CD4-positive, alpha-beta T cell (primary cell): ENCODE measurements at regions of chr2 and their contacts with region 1.

Region 1: DNA sequence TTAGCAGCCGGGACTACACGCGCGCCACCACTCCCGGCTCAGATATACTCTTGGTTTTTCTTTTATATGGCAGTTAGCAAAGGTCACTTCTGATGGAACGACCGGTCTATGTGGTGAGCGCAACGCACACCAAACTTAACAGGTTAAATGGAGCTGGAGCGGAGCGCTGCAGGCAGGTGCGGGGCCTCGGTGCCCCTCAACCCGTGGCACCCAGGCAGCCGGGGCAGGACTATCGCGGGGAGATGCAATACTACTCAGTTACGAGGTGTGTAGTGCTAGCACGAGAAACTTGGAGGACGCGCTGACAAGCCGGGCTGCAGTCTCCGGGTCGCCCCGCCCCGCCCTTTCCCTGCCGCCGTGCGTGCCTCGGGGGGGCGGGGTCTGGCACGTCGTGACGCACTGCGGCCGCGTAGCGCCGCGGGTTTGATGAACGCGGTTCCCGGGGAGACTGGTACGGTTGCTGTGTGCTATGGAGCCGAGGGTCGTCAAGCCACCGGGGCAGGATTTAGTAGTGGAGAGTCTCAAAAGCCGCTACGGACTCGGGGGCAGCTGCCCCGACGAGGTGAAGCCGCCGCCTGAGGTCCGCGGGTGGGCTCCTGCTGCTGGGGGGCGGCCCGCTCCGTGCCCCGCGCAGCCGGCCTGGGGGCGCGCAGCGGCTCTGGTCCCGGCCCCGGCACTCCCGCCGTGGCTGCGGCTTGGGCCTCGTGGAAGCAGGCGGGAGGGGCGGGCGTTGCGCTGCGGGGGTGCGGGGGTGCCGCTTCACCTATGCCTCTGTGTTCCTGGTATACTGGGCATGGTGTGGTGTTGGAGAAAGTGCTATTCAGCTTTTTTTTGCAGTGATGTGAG is at the start of gene CCDC138:
- DNase-seq: peak; percentile 83 to 96 (median 90)
- ATAC-seq: peak; percentile 95
- H3K4me3 ChIP-seq: peak within 1 kb of the TSS; percentile 78
- H3K4me3 Mint-ChIP-seq: peak within 1 kb of the TSS; percentile 99
- H3K27ac ChIP-seq: peak within 1 kb of the TSS; percentile 33 to 63
- H3K27ac Mint-ChIP-seq: peak within 1 kb of the TSS; percentile 92
- H3K4me1 ChIP-seq: peaks cover 8% of the 10 kb centered on the region
- H3K4me1 Mint-ChIP-seq: peaks cover 22% of the 10 kb centered on the region
- H3K27me3 ChIP-seq: no peaks in the 10 kb centered on the region
- H3K27me3 Mint-ChIP-seq: no peaks in the 10 kb centered on the region
- CTCF ChIP-seq: no peak
- total RNA-seq, gene CCDC138: 4.7 to 5.8 TPM

Region 2: DNA sequence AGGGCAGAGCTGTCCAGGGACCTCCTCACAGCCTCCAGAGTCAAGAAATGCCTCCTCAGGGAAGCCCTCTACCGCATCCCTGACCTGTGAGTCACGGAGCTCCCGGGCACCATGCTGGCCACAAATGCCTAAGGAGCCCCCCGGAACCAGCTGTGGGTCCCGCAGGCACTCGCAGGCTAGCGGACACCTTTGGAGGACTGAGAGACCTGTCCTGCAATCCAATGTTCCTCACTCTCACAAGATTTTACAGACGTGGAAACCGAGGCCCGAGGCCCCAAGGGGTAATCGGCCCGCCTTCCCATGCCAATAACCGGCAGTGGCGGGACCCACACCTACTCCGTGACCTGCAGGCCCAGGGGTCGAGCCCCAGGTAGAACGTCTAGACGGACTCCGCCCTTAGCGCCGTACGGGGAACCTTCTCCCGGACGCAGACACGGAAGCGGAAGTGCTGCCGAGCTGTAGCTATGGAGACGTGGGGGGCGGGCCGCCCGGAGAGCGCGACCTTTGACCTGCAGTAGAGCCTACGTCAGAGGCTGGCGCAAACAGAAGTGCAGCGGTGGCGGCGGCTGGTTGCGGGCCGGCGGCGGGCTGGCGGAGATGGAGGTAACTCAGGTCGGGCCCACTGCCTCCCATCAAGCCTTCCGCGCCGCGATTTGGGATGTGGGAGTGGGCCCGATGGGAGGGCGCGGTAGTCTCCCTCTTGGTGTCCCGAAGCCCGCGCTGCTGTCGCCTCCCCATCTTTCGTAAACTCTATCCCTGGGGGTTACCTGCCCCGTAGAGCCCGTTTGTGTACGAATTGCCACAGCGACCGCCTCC is 337.7 kb before region 1 on chr2 and contains the start of gene GCC2:
- CTCF ChIA-PET with region 1: no interaction called
- POLR2A ChIA-PET with region 1: no interaction called
- intact Hi-C with region 1: loop called in 1 of 2 experiments (anchors 10 kb)
- DNase-seq: peak; percentile 94 to 98 (median 96)
- ATAC-seq: peak; percentile 93
- H3K4me3 ChIP-seq: peak within 1 kb of the TSS; percentile 88
- H3K4me3 Mint-ChIP-seq: peak within 1 kb of the TSS; percentile 97
- H3K27ac ChIP-seq: peak within 1 kb of the TSS; percentile 88 to 97
- H3K27ac Mint-ChIP-seq: peak within 1 kb of the TSS; percentile 97
- H3K4me1 ChIP-seq: peaks cover 24% of the 10 kb centered on the region
- H3K4me1 Mint-ChIP-seq: peaks cover 50% of the 10 kb centered on the region
- H3K27me3 ChIP-seq: no peaks in the 10 kb centered on the region
- H3K27me3 Mint-ChIP-seq: no peaks in the 10 kb centered on the region
- CTCF ChIP-seq: no peak
- total RNA-seq, gene GCC2: 134 to 141 TPM

Region 3: DNA sequence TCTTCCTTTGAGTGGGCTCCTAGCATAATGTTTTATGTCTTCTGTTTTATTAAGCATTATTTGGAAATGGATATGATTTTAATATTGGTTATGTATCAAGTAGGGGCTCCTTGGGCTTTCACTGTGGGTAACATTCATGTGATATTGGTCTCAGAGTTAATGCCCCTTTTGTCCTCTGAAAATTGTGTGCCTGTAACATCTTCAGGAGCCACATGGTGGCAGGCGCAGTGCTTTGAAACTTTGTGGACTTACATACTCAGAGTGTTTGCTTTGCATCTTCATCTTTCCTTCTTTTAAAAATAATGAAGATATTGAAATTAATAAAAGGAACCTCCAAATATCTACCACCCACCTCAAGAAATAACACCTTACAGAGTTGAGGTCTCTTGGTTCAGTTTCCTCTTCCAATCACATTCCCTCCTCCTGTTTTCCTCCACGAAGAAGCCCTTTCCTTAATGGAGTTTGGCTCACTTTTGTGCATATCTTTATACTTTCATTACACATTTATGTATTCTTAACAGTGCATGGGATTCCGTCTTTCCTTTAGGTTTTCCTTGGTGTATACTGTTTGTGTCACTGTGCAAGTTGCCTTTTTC is 178.8 kb before region 1 on chr2:
- CTCF ChIA-PET with region 1: no interaction called
- POLR2A ChIA-PET with region 1: no interaction called
- intact Hi-C with region 1: loop called in 1 of 2 experiments (anchors 5 kb)
- DNase-seq: peak; percentile 30 to 80 (median 54)
- ATAC-seq: peak; percentile 54
- H3K4me3 ChIP-seq: no peak overlapping the region
- H3K4me3 Mint-ChIP-seq: no peak overlapping the region
- H3K27ac ChIP-seq: no peak overlapping the region
- H3K27ac Mint-ChIP-seq: no peak overlapping the region
- H3K4me1 ChIP-seq: peaks cover 32% of the 10 kb centered on the region
- H3K4me1 Mint-ChIP-seq: peaks cover 44% of the 10 kb centered on the region
- H3K27me3 ChIP-seq: no peaks in the 10 kb centered on the region
- H3K27me3 Mint-ChIP-seq: no peaks in the 10 kb centered on the region
- CTCF ChIP-seq: peak; percentile 81